OCI-LY7 (cell line): ENCODE measurements at regions of chr7 and their contacts with region 1.

Region 1: GRCh38 chr7:25951031-25951948 is 200.7 kb upstream of the NFE2L3 start:
- DNase-seq: peak; percentile 97
- H3K4me3 ChIP-seq: peak overlapping the region; percentile 76
- H3K27ac ChIP-seq: peak overlapping the region; percentile 28
- H3K4me1 ChIP-seq: peaks cover 61% of the 10 kb centered on the region
- CTCF ChIP-seq: no peak

Region 2: DNA sequence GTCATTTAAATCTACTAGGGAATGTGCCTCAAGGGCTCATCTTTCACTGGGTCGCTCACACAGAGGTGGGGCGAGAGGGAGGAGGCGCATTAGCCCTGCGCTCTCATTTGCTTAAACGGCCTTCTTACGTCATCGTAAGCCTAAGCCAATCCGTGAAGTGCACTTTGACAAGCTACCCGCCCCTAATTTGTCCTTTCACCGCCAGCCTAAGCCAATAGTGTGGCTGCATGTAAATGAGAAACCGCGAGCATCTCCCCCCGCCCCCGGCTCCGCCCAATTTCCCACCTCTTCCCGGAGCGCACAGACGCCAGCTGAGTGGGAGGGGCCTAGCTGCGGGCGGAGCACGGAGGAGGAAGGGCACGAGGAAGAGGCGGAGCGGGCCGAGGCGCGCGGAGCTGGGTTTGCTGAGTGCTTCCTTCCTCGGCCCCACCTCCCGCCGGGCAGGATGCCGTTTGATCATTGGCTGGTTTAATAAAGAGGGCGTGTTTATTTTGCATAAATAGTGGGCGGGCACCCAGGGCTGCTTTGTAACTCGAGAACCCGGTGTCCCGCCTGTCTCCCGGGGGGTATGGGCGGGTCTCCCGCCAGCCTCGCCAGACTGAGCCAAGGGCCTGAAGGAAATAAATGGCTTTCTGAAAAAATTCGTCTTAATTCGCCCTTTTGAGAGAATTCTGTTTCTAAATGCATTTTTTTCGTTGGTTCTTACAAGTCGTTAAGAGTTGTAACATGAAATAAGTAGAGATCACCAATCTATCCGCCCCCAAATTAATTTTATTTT is 88.8 kb before region 1 on chr7:
- CTCF ChIA-PET with region 1: no interaction called
- POLR2A ChIA-PET with region 1: interaction called, 3 read pairs
- intact Hi-C with region 1: loop called (anchors 2 kb)
- DNase-seq: peak; percentile 100
- H3K4me3 ChIP-seq: peak overlapping the region; percentile 70
- H3K27ac ChIP-seq: peak overlapping the region; percentile 4
- H3K4me1 ChIP-seq: peaks cover 8% of the 10 kb centered on the region
- CTCF ChIP-seq: no peak

Region 3: GRCh38 chr7:25968205-25968993 is 17.1 kb after region 1 on chr7:
- CTCF ChIA-PET with region 1: no interaction called
- POLR2A ChIA-PET with region 1: interaction called, 8 read pairs
- intact Hi-C with region 1: loop called (anchors 1 kb)
- DNase-seq: peak; percentile 97
- H3K4me3 ChIP-seq: peak overlapping the region; percentile 35
- H3K27ac ChIP-seq: peak overlapping the region; percentile 94
- H3K4me1 ChIP-seq: peaks cover 67% of the 10 kb centered on the region
- CTCF ChIP-seq: no peak; the same call in 1 of the 2 replicates